HepG2 (cell line): ENCODE measurements at regions of chr6 and their contacts with region 1.

Region 1: GRCh38 chr6:47477497-47478232 is at the start of gene CD2AP:
- DNase-seq: peak; percentile 84
- ATAC-seq: peak; percentile 94
- H3K4me3 ChIP-seq: peak within 1 kb of the TSS; percentile 91 to 94 (median 93)
- H3K27ac ChIP-seq: peak within 1 kb of the TSS; percentile 93
- H3K4me1 ChIP-seq: peaks cover 40% of the 10 kb centered on the region
- H3K27me3 ChIP-seq: no peaks in the 10 kb centered on the region; a peak in 1 of 5 replicates
- CTCF ChIP-seq: peak; percentile 48
- EP300 ChIP-seq: no peak; a peak in 1 of 4 replicates
- POLR2A ChIP-seq: peak; percentile 81 to 85
- RAD21 ChIP-seq: peak; percentile 43; the same call in 1 of the 2 replicates
- total RNA-seq, gene CD2AP: 31.9 and 40.1 TPM in 2 replicates

Region 2: DNA sequence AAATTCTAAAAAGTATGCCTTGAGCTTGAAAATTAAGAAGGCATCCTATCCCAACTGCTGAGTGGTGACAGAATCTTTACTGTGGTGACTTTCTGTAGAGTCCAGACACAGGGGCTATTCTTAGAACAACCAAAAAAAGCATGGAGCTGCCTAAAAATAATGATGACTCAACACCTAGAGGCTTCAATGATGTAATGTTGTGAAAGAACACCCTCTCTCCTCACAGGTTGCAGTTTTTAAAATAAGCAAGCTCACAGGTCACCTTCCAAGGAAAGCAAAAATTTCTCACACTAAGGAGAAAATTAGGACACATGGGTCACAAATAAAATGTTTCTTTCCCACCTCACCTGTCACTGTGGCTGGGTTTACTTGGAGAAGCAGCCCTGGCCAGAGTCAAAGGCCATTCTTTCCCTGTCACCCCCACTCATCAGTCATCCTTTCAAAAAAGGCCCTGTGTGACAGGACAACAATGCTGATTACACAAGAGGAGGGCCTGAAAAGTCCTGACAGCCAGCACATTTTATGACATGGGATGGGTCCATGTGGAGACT is 1039.9 kb before region 1 on chr6:
- CTCF ChIA-PET with region 1: no interaction called
- POLR2A ChIA-PET with region 1: no interaction called
- in situ Hi-C with region 1: no loop called
- intact Hi-C with region 1: no loop called
- DNase-seq: no peak
- ATAC-seq: no peak
- H3K4me3 ChIP-seq: no peak overlapping the region
- H3K27ac ChIP-seq: no peak overlapping the region
- H3K4me1 ChIP-seq: no peaks in the 10 kb centered on the region
- H3K27me3 ChIP-seq: no peaks in the 10 kb centered on the region
- CTCF ChIP-seq: no peak
- EP300 ChIP-seq: no peak
- POLR2A ChIP-seq: no peak
- RAD21 ChIP-seq: no peak

Region 3: GRCh38 chr6:47103931-47104330 is 373.7 kb before region 1 on chr6:
- CTCF ChIA-PET with region 1: no interaction called
- POLR2A ChIA-PET with region 1: no interaction called
- in situ Hi-C with region 1: no loop called
- intact Hi-C with region 1: no loop called
- DNase-seq: no peak
- ATAC-seq: no peak
- H3K4me3 ChIP-seq: no peak overlapping the region
- H3K27ac ChIP-seq: no peak overlapping the region
- H3K4me1 ChIP-seq: peaks cover 28% of the 10 kb centered on the region
- H3K27me3 ChIP-seq: no peaks in the 10 kb centered on the region
- CTCF ChIP-seq: no peak
- EP300 ChIP-seq: no peak
- POLR2A ChIP-seq: no peak
- RAD21 ChIP-seq: no peak

Region 4: DNA sequence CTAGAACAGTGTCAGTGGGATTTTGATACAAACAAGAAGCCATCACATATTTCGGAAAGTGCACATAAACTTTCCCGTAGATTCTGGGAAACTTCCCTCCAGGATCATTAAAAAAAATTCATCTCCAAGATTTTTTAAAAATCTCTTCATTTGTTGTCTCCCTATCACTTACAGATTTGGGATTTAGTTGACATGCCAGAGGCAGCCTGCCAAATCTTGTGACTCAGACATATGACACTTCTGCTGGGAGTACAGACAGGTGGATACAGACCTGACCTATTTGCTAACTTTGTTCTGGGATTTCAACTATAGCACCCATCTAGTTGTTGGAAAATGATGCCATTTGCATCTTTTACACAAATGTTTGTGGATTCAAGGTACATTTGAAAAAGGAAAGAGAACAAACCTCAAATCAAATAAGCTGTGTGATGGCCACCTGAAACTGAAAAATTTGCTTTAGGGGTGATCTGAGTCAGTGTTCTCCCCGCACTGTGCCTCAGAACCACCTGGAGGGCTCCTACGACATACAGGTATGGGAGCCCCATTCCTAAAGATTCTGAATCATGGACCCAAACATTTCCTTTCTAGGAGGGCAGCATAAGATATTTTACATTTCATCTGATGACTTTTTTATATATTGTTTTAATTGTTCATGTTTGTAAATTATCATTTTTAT is 22.0 kb before region 1 on chr6:
- CTCF ChIA-PET with region 1: no interaction called
- POLR2A ChIA-PET with region 1: interaction called, 29 read pairs
- in situ Hi-C with region 1: no loop called
- intact Hi-C with region 1: no loop called
- DNase-seq: no peak
- ATAC-seq: no peak
- H3K4me3 ChIP-seq: no peak overlapping the region
- H3K27ac ChIP-seq: no peak overlapping the region
- H3K4me1 ChIP-seq: peaks cover 13% of the 10 kb centered on the region
- H3K27me3 ChIP-seq: 0 out of 5 replicates have a peak, but pooled peaks cover 0 to 4% of the 10 kb centered on the region in 2 experiments
- CTCF ChIP-seq: no peak
- EP300 ChIP-seq: no peak
- POLR2A ChIP-seq: no peak
- RAD21 ChIP-seq: no peak

Region 5: GRCh38 chr6:47495954-47496545 is 18.4 kb after region 1 on chr6:
- CTCF ChIA-PET with region 1: no interaction called
- POLR2A ChIA-PET with region 1: interaction called, 14 read pairs
- in situ Hi-C with region 1: no loop called
- intact Hi-C with region 1: no loop called
- DNase-seq: no peak
- ATAC-seq: no peak
- H3K4me3 ChIP-seq: no peak overlapping the region
- H3K27ac ChIP-seq: no peak overlapping the region
- H3K4me1 ChIP-seq: peaks cover 42% of the 10 kb centered on the region
- H3K27me3 ChIP-seq: no peaks in the 10 kb centered on the region
- CTCF ChIP-seq: no peak
- EP300 ChIP-seq: no peak
- POLR2A ChIP-seq: no peak
- RAD21 ChIP-seq: no peak

Region 6: GRCh38 chr6:47519279-47519678 is 41.6 kb after region 1 on chr6:
- CTCF ChIA-PET with region 1: no interaction called
- POLR2A ChIA-PET with region 1: interaction called, 5 read pairs
- in situ Hi-C with region 1: no loop called
- intact Hi-C with region 1: loop called (anchors 5 kb)
- DNase-seq: peak; percentile 90
- ATAC-seq: peak; percentile 98
- H3K4me3 ChIP-seq: no peak overlapping the region
- H3K27ac ChIP-seq: no peak overlapping the region
- H3K4me1 ChIP-seq: peaks cover 24% of the 10 kb centered on the region
- H3K27me3 ChIP-seq: no peaks in the 10 kb centered on the region
- CTCF ChIP-seq: no peak
- EP300 ChIP-seq: peak in 1 of 2 experiments; percentile 41; a peak in 1 of 4 replicates
- POLR2A ChIP-seq: no peak
- RAD21 ChIP-seq: no peak